ENCODE measurements at regions of chr16 and their contacts with region 1.

Region 1: DNA sequence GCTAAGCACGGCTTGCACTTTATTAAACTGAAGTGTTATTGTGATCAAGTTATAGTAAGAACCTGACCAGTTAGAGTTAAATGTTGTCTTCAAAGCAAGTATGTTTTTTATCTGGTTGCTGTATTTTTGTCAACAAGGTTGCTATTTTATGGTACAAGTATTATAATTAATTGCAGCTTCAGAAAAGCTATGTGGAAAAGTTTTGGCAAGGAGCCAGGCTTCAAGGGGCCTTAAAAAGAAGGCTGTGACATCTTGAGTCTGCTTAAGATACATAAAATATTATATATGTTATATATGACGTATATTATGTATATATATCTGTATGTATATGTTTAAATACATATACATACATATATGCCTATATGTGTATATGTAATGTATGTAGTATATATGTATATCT is 1461.2 kb upstream of the CDH8 start:
- DNase-seq: no peak
- H3K4me3 ChIP-seq: no peak overlapping the region
- CTCF ChIP-seq: no peak

Region 2: DNA sequence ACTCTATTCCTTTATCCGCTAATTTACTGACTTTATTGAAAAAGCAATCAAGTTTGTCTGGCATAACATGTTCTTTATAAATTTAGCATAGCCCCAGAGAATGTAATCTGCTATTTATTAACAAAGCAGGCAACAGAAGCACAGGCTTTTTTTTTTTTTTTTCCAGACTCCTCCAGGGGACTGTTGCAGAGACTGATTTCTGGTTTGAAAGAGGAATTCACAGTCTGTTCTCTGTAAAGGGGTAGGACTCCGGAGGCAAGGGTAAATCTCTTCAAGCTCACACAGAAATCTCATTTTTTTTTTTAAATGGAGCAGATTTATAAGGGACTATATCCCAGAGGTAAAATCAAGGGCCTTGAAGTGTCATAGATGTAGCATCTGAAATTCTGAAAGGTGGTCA is 74.7 kb before region 1 on chr16:
- in situ Hi-C with region 1: loop called (anchors 5 kb)
- DNase-seq: no peak
- H3K4me3 ChIP-seq: no peak overlapping the region
- CTCF ChIP-seq: no peak

Region 3: DNA sequence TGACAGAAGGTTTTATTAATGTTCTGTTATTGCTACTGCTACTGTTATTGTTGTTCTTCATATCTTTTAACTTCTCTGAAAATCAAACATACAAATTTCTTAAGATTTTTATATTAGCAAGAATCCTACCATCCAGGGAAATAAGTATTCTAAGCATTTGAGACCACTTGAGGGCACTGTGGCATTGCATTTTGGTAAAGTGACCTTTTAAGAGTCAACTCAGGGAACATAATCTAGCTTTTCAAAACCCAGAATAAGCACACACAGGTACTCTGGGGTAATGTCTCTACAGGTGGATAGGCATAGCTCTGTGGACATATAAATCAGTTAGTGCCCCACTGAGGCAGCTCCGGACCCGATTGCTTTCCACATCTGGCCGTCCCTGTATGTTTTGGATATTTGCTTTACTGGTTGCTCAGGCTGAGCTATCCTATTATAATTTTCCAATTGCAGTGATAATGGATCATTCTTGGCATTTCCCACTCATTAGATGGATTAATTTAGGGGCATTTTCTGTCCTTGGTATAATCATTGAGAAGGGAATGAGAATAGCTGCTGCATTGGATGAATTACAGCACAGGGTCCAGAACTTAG is 36.1 kb before region 1 on chr16:
- in situ Hi-C with region 1: no loop called
- DNase-seq: peak; percentile 60
- H3K4me3 ChIP-seq: no peak overlapping the region
- CTCF ChIP-seq: peak; percentile 39